Posterior vena cava (tissue), 2 donors: ENCODE measurements at regions of chr12 and their contacts with region 1.

Region 1: DNA sequence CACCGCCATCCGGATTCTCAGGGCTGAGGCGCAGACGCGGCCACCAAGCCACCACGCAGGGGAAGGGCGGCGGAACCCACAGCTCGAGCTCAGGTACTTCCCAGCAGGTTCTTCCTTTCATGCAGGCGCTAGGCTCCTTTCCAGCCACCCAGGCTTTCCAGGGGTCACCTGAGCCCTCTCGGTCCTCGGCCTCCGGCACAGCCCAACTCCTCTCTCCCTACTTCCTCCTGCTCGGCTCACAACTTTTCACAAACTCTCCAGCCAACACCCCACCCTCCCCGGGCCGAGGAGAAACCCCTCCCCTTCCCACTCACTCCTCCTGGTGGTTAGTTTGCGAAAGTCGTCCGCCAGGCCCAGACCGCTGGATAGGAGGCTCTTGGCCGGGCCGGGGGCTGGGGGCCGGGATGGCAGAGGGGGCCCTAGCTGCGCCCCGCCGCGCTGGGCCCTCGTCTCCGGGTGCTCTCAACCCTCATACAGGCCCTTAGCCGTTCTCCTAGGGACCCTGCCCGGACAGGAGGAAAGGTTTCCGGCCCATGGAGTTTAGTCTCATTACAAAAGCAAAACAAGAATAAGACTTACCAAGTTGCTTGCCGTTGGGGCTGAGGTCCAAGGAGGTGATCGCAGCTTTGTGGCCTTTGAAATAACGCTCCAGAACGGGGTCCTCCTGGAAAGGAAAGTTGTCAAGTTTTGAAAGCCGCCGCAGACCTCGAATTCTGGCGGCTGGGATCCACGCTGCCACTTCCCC is at the start of gene GALNT4:
- DNase-seq: peak; percentile 96
- total RNA-seq, gene GALNT4: 5.4 to 6.2 TPM

Region 2: DNA sequence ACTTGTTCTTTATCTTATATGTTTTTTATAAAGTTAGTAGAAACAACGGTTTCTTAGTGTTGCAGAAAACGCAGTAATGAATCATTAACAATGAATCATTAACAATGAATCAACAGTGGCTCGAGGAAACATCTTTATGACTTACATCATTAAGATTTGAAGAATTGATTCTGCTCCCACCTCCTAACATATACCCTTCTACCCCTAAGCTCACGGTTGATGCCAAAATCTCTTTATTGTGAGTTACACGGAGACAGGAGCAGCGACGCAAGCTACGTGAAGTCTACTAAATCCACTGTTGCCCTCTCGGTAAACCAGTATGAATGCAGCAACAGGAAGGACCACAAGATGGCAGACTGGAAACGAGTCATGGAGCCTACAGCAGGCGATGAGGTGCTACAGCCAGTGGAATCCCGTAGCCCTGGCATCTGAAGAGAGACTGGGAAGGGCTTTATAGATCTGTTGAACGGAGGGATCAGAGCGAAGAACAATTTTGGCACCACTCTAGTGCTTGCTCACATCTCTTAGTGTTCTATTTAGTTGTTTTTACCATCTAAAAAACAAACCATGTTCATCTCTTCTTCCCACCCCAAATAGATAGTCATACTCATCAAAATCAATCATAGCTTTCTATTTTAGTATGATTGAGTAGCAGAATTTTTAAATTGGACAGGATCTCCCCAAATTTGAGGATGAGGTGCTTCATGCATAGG is 505.1 kb before region 1 on chr12:
- intact Hi-C with region 1: loop called (anchors 5 to 10 kb)
- DNase-seq: no peak

Region 3: DNA sequence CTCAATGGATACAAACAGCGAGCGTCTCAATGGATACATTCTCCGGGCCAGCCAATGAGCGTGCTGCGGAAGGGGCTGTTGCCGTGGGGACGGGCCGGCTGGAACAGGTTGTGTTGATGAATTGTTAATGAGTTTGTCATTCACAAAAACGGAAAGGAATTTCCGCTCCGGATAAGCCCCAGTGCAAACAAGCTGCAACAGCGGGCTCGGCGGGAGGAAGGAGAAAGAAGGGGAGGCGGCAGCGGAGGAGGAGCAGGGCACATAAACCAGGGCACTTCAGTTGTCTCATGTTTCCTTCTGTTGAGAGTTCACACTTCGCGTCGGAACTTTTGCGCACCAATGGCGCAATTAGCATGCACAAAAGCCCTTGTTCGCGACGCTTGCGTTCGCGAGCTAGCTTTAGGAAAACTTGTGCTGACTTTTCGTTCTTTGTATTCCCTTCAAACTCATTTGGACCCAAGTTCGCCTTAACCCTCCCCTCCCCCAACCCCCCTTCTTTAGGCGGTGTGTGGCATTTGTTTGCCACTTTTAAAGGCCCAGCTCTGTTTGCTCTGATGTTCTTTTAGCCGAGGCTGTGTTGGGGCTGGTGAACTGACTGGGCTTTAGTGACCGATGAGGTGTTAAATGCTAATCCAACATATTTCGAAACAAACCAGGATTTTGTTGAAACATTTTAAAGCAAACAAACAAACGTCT is 172.1 kb before region 1 on chr12 and contains the start of gene DUSP6:
- intact Hi-C with region 1: loop called in 1 of 2 experiments (anchors 5 kb)
- DNase-seq: peak; percentile 98
- total RNA-seq, gene DUSP6: 42.2 to 49.6 TPM

Region 4: DNA sequence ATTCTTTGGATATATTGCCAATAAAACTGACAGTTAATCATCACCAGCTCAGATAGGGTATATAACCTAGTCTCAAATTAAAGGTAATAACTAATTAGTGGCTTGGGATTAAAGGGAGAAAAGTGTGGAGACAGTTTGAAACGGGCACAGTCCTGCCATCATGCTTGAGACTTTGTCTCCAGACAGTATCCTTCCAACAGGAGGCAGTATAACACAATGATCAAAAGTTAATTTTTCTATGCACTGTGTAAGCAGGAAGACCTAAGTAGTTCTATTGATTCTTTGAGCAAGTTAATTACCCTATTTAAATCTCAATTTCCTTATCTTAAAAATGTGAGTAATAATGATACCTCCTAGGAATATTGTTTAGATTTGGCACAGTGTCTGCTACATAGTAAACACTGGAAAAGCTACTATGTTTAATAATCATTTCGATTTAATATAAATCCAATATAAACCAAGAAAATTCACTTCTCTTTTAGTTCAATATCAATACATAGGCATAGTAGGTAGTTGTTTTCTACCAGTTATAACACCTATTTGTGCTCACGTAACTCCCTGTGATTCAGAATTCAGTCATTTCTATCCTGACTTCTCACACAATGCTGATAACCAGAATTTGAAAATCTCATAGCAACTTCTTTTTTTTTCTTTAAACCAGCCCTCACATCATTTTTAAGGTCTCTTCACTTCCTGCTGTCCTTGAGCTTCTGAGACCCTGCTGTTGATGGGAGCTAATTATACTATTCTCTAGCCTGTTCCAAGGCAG is 53.8 kb before region 1 on chr12:
- intact Hi-C with region 1: loop called (anchors 5 to 10 kb)
- DNase-seq: no peak

Region 5: DNA sequence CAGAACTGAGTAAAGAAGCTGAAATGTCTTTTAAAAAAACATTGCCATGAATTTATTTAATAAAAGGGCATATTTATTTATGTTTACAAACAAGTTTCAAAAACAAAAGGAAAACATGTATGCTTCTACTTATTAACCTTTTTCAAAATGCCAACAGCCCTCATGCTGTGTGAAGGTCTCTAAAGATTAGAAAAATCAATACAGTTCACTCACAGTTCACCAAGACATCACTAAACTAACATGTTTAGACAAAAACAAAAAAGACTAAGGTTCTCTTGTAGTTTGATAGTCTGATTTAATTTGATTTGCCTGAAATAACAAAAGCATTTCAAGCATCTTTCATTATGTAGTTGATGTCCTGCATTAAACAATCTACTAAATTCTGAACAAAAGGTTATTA is 65.0 kb after region 1 on chr12:
- intact Hi-C with region 1: no loop called
- DNase-seq: no peak